ENCODE measurements at regions of chr6 and their contacts with region 1.

Region 1: DNA sequence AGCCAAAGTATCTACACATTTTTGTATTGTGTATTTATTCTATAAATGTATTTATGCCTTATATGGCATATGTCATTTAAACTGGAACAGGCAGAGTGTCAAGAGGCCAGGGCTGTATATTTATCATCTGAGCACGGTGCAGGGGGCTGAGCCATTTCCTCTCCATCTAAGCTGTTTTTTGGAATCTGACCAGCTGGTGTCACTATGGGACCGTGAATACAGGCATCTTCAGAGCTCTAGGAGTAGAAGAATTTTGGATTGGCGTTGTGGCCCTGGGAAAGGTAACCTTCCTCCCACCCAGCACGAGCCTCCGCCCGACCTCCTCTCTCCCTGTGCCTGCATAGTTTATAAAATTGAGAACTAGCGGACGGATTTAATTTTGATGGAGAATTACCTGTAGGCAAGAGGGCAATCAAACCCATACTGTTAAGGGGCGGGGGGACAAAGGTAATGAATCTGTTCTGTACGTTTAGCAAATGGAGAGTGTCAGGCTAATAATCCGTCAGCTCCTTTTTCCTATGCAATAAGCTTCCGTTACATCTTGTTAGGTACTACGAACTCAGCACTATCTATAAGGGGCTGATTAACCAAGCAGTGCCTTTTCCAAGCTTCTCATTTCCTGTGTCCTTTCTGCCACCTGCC is 29.0 kb upstream of the EEF1E1 start:
- DNase-seq: peak; percentile 28 to 50
- ATAC-seq: peak; percentile 95 to 96
- H3K4me3 ChIP-seq: no peak overlapping the region
- H3K27ac ChIP-seq: no peak overlapping the region
- H3K4me1 ChIP-seq: no peaks in the 10 kb centered on the region; the same call in 2 of the 3 replicates
- CTCF ChIP-seq: peak; percentile 70
- EP300 ChIP-seq: no peak
- POLR2A ChIP-seq: no peak
- RAD21 ChIP-seq: peak; percentile 80

Region 2: DNA sequence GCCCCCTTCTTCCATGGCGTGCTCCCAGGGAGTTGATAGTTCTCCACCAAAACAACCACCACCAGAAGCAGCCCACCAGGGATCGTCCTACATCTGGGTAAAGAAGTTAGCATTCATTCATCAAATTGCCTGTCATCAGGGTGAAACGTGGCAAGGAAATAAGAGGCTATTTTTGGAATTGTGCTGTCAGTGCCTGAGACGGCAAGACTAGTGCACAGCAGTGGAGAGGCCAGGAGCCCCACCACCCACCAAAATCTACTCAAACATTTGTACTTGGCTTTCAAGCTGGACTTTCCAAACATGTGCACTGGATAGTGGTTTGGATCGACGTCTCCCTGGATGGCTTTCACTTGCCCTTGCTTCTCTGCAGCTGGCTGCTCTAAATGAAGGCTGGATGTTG is 265.6 kb before region 1 on chr6:
- CTCF ChIA-PET with region 1: no interaction called
- POLR2A ChIA-PET with region 1: no interaction called
- DNase-seq: no peak
- ATAC-seq: no peak
- H3K4me3 ChIP-seq: no peak overlapping the region
- H3K27ac ChIP-seq: no peak overlapping the region
- H3K4me1 ChIP-seq: no peaks in the 10 kb centered on the region
- CTCF ChIP-seq: no peak
- EP300 ChIP-seq: no peak
- POLR2A ChIP-seq: no peak
- RAD21 ChIP-seq: no peak

Region 3: DNA sequence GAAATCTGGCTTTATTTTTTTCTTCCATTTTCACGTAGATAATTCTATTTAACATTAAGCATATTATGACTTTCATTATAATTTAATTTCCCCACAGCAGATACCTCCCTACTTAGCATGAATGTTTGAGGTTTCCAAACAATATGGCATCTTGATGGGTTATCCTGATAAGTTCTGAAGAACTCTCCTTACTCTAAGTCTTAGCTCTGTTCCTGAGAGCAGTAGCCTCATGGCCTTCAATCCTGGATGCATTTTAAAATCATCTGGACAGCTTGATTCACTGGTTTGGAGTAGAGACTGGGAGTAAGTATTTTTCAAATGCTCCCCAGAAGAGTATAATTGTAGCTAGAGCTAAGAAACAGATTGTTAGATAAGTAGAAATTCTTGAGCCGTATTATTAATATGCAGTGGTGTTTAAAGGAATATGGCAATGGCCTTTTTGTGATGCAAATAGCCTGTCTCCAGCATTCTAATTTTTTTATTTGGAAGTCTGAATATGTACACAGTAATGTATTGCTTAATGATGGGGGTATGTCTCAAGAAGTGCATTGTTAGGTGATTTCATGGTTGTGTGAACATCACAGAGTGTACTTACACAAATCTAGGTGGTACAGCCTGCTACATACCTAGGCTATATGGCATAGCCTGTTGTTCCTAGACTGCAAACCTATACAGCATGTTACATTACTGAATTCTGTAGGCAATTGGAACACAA is 81.5 kb after region 1 on chr6:
- CTCF ChIA-PET with region 1: interaction called, 137 read pairs
- POLR2A ChIA-PET with region 1: no interaction called
- DNase-seq: no peak
- ATAC-seq: no peak
- H3K4me3 ChIP-seq: no peak overlapping the region
- H3K27ac ChIP-seq: no peak overlapping the region
- H3K4me1 ChIP-seq: no peaks in the 10 kb centered on the region
- CTCF ChIP-seq: no peak
- EP300 ChIP-seq: no peak
- POLR2A ChIP-seq: no peak
- RAD21 ChIP-seq: no peak

Region 4: DNA sequence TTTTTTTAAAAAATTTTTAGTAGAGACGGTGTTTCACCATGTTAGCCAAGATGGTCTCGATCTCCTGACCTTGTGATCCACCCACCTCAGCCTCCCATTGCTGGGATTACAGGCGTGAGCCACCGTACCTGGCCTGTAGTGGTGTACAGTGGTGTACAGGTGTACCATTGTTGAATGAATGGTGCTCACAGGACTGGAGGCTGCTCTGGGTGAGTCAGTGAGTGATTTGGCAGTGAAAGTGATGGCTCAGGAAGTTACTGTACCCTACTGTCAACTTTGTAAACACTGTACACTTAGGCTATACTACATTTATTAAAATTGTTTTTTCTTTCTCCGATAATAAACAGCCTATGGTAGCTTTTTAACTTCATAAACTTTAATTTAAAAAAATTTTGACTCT is 93.7 kb after region 1 on chr6:
- CTCF ChIA-PET with region 1: interaction called, 137 read pairs
- POLR2A ChIA-PET with region 1: no interaction called
- DNase-seq: no peak
- ATAC-seq: no peak
- H3K4me3 ChIP-seq: no peak overlapping the region
- H3K27ac ChIP-seq: no peak overlapping the region
- H3K4me1 ChIP-seq: no peaks in the 10 kb centered on the region
- CTCF ChIP-seq: no peak
- EP300 ChIP-seq: no peak
- POLR2A ChIP-seq: no peak
- RAD21 ChIP-seq: no peak